ENCODE measurements at regions of chr4 and their contacts with region 1.

Region 1: DNA sequence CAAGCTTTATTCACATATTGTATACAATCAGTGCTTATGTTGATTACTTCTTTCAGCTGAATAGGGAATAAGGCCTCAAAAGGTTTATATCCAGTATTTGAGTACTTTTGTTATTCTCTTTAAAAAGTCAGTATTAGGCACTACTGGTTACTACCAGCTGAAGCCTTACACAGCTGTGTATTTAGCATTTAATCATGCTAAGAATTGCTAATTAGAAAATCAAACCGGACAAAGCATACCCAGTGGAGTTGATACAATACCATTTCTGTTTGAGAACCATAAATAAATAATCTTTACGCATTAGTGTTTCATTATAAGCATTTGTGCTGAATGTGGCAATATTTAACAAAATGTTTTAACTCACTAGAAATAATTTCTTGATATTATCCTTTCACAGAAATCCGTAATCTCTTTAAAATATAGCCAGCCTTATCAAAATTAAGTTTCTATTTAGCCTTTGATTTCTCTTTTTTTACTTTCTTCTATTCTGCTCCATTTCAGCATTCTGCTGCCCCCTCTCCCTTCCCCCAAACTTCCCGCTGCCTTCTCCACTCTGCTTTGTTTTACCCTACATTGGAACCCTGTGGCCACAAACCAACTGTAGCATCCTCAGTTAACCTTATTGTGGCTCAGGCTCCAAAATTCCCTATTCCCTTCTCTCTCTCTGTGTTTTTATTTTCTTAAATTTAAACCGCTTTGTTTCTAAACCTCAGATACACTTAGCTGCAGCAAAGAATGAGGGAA is 37.8 kb downstream of the UGT8 start:
- DNase-seq: no peak
- ATAC-seq: no peak
- H3K4me3 Mint-ChIP-seq: no peak overlapping the region
- H3K27ac Mint-ChIP-seq: no peak overlapping the region
- H3K4me1 Mint-ChIP-seq: peaks cover 42% of the 10 kb centered on the region
- H3K27me3 Mint-ChIP-seq: no peaks in the 10 kb centered on the region
- CTCF ChIP-seq: no peak

Region 2: GRCh38 chr4:114598191-114599121 is 37.9 kb before region 1 on chr4 and contains the start of gene UGT8:
- CTCF ChIA-PET with region 1: no interaction called
- POLR2A ChIA-PET with region 1: no interaction called
- intact Hi-C with region 1: loop called (anchors 2 kb)
- DNase-seq: peak; percentile 83
- ATAC-seq: peak; percentile 75
- H3K4me3 Mint-ChIP-seq: peak within 1 kb of the TSS; percentile 97
- H3K27ac Mint-ChIP-seq: peak within 1 kb of the TSS; percentile 90
- H3K4me1 Mint-ChIP-seq: peaks cover 22% of the 10 kb centered on the region
- H3K27me3 Mint-ChIP-seq: no peaks in the 10 kb centered on the region
- CTCF ChIP-seq: no peak
- total RNA-seq, gene UGT8: 12.9 and 20.0 TPM in 2 replicates

Region 3: DNA sequence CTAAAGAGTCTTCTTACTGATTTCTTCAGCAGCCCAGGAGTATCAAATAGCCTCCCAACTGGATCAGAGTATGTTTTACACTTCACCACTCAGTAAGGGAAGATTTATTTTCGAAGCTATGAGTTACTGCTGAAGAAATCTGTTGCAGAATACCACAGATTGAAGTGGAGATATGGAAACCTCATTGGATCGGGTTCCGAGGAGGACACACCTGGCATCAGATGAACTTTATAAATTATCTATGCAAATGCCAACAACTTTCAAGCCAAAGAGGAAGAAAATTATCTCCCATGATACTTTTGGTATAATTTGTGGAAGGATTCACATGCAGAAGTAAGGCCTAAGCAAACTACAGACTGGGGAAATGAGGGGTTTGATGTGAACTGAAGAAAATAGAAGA is 992.9 kb after region 1 on chr4:
- CTCF ChIA-PET with region 1: no interaction called
- POLR2A ChIA-PET with region 1: no interaction called
- intact Hi-C with region 1: no loop called
- DNase-seq: no peak
- ATAC-seq: no peak
- H3K4me3 Mint-ChIP-seq: no peak overlapping the region
- H3K27ac Mint-ChIP-seq: no peak overlapping the region
- H3K4me1 Mint-ChIP-seq: no peaks in the 10 kb centered on the region
- H3K27me3 Mint-ChIP-seq: no peaks in the 10 kb centered on the region
- CTCF ChIP-seq: no peak

Measured in activated B cell treated with CpG ODN at 0.5 μM for 24 hours (primary cell).